PC-9 (cell line): ENCODE measurements at regions of chr3 and their contacts with region 1.

Region 1: DNA sequence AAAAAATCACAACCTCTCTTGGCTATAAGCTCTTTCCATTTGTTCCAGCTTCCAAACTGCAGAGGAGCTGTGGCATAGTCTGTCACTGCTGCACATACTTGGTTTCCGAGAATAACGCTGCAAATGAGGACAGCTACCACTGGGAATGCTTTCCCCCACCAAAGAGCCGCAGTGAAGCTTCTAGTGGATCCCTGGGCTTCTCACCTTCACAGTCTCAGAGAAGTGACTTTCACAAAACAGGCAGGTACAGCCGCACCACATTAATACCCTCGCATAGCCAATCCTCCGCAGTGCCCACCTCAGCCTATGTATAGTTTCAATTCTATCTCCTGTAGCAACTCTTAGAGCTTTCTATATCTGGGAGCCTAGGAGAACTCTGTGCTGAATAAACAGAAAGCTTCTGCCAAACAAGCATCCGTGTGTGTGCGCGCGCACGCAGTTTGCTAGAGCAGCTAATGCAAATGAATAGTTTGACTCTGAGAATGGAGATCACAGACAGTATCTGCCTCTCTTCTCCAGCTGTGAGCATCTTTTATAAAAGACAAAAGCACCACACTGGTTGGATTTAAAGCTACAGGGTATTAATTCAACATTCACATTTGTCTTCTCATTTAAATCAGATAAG is 81.9 kb upstream of the PLXND1 start:
- DNase-seq: no peak
- H3K4me3 ChIP-seq: no peak overlapping the region
- H3K27ac ChIP-seq: peak overlapping the region; percentile 72
- H3K4me1 ChIP-seq: peaks cover 64% of the 10 kb centered on the region
- H3K27me3 ChIP-seq: no peaks in the 10 kb centered on the region
- CTCF ChIP-seq: no peak

Region 2: GRCh38 chr3:129673882-129674797 is 14.2 kb before region 1 on chr3:
- CTCF ChIA-PET with region 1: no interaction called
- POLR2A ChIA-PET with region 1: no interaction called
- intact Hi-C with region 1: loop called (anchors 2 kb)
- DNase-seq: peak in 1 of 2 experiments; percentile 87
- H3K4me3 ChIP-seq: no peak overlapping the region
- H3K27ac ChIP-seq: peak overlapping the region; percentile 77
- H3K4me1 ChIP-seq: peaks cover 30% of the 10 kb centered on the region
- H3K27me3 ChIP-seq: no peaks in the 10 kb centered on the region
- CTCF ChIP-seq: no peak

Region 3: DNA sequence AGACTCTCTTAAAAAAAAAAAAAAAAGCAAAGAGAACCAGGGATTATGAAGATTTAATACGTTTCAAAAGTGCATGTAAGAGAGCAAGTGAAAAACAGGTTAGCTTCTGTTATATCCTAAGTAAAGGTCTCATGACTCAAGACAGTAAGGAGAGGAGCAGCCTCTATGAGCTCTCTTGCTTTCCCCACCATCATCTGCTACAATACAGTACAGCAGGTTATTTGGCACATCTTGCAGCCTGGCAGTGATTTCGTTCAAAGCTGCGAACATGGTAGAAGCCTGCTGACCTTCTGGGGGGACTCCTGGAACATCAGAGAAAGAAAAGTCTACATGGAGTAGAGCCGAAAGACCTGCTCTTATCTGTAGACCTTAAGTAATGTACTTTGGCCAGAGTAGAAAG is 47.3 kb after region 1 on chr3:
- CTCF ChIA-PET with region 1: interaction called, 16 read pairs
- POLR2A ChIA-PET with region 1: no interaction called
- intact Hi-C with region 1: no loop called
- DNase-seq: no peak
- H3K4me3 ChIP-seq: no peak overlapping the region
- H3K27ac ChIP-seq: no peak overlapping the region
- H3K4me1 ChIP-seq: peaks cover 15% of the 10 kb centered on the region
- H3K27me3 ChIP-seq: no peaks in the 10 kb centered on the region
- CTCF ChIP-seq: no peak